ENCODE measurements at regions of chrX and their contacts with region 1.

Region 1: DNA sequence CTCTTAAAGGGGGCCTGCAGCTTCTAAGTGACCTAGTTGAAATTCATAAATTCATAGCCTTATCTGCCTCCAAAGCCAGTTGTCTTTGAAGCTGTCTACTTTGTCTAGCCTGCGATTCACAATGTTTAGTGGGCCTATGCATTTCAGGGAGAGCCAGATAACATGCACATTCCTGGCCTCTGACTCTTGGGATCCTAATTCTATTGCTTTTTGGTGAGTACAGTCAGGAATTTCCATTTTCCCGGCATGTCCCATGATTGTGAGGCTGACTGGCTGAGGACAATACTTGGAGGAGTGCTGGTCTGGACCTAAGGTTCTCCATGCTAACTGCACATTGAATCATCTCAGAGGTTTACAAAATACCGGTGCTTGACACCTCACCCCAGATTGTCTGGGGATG is 155.0 kb downstream of the MSL3 start:
- DNase-seq: no peak
- ATAC-seq: no peak
- H3K4me3 ChIP-seq: no peak overlapping the region
- H3K27ac ChIP-seq: no peak overlapping the region
- H3K4me1 ChIP-seq: no peaks in the 10 kb centered on the region
- H3K27me3 ChIP-seq: peaks cover 0 to 9% (median 0%) of the 10 kb centered on the region in 7 donors
- CTCF ChIP-seq: no peak

Region 2: DNA sequence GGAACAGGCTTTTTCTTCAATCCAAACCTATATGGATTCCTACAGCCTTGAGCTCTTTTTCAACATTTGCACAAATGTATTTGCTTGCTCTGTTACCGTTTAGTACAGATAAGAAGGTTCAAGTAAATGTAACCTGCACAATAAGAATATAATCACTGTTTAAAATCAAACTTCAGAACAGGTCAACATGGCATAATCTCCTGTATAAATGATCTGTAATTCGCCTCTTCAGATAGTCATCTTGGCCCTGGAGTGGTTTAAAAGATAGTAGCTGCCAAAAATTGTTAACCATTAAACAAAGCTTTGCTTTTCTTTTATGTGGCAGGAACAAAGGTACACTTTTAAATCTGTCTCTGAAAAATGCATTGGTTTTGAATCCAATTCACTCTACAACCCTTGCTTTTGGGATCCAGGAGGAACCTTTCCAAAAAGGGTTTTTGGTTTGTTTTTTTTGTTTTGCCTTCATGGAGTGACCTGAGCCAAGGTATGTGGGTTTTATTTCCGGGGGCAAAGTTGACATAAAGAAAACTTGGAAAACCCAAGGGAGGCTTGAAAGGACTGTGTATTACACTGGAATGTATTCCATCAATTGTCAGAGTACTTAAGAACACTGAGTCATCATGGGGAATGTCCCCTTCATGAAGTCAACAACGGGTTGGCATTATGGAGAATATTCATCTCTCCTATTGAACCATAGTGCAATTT is 1012.3 kb before region 1 on chrX:
- intact Hi-C with region 1: no loop called
- DNase-seq: no peak
- ATAC-seq: no peak
- H3K4me3 ChIP-seq: no peak overlapping the region
- H3K27ac ChIP-seq: no peak overlapping the region
- H3K4me1 ChIP-seq: no peaks in the 10 kb centered on the region
- H3K27me3 ChIP-seq: no peaks in the 10 kb centered on the region
- CTCF ChIP-seq: no peak

Region 3: DNA sequence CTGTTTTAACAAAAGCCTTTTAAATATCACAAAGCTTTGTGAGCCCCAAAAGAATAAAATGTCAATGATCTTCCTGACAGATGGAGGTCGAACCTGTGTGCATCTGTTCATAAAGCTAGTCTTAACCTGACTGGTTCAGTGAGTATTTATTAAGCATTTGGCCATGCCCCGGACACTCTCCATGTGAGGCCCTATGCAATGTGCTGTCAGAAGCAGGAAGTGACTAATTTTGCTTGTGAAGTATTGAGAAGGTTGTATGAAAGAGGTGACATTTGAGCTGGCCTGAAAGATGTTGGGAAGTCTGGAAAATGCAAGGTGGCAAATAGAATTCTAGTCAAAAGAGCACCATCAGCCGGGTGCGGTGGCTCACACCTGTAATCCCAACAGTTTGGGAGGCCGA is 16.5 kb after region 1 on chrX:
- intact Hi-C with region 1: loop called in 1 of 10 experiments (anchors 1 kb)
- DNase-seq: no peak
- ATAC-seq: no peak
- H3K4me3 ChIP-seq: no peak overlapping the region
- H3K27ac ChIP-seq: no peak overlapping the region
- H3K4me1 ChIP-seq: no peaks in the 10 kb centered on the region
- H3K27me3 ChIP-seq: no peaks in the 10 kb centered on the region
- CTCF ChIP-seq: no peak

Region 4: DNA sequence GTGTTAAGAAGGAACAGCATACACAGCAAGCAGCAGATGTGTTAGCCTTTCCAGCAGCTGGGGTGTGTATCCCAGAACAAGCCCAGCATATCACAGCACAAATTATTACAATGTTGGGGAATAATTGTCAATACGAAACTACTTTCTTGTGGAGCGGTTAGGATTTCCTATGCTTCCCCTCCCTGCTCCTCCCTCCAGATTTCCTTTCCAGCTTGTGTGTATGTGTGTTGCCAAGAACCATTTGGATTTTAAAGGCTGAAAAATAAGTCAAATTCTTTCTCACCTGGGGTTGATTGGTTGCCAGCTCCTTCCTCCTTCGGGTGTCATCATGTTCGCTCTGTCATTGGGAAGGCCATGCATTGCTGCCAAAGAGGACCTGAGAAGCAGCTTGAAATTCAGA is 47.0 kb after region 1 on chrX:
- intact Hi-C with region 1: no loop called
- DNase-seq: no peak
- ATAC-seq: peak in 1 of 8 donors; percentile 48
- H3K4me3 ChIP-seq: no peak overlapping the region
- H3K27ac ChIP-seq: no peak overlapping the region
- H3K4me1 ChIP-seq: no peaks in the 10 kb centered on the region
- H3K27me3 ChIP-seq: no peaks in the 10 kb centered on the region
- CTCF ChIP-seq: no peak

Measured in heart right ventricle (tissue), 16 donors.